GM12878 (cell line): ENCODE measurements at regions of chr7 and their contacts with region 1.

Region 1: GRCh38 chr7:27739909-27740448 is at the start of gene TAX1BP1:
- DNase-seq: peak; percentile 70
- ATAC-seq: peak; percentile 95
- H3K4me3 ChIP-seq: peak within 1 kb of the TSS; percentile 100
- H3K27ac ChIP-seq: peak within 1 kb of the TSS; percentile 96
- H3K4me1 ChIP-seq: no peaks in the 10 kb centered on the region
- H3K27me3 ChIP-seq: no peaks in the 10 kb centered on the region
- CTCF ChIP-seq: no peak
- EP300 ChIP-seq: no peak
- POLR2A ChIP-seq: peak; percentile 85
- RAD21 ChIP-seq: no peak
- polyA plus RNA-seq, gene TAX1BP1: 52.9 to 88.4 TPM

Region 2: DNA sequence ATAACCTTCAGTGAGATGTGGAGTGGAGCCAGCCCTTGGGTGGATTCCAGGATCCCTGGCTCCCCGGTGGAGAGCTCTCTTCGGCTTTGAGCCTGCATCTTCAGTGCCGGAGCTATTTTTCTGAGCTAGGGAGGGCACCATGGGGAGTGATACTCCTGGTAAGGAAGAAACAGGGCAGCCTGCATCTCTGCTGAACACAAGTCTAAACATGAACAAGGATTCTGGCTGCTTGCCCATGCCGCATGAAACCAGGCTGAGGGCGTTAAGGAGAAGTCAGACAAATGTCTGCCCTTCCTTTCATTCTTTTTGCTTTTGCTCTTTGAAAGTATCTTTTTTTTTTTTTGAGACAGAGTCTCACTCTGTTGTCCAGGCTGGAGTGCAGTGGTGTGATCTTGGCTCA is 437.0 kb before region 1 on chr7:
- CTCF ChIA-PET with region 1: no interaction called
- POLR2A ChIA-PET with region 1: no interaction called
- RAD21 ChIA-PET with region 1: no interaction called
- SMC1A ChIA-PET with region 1: no interaction called
- in situ Hi-C with region 1: no loop called
- intact Hi-C with region 1: no loop called
- DNase-seq: no peak
- ATAC-seq: no peak
- H3K4me3 ChIP-seq: no peak overlapping the region
- H3K27ac ChIP-seq: no peak overlapping the region
- H3K4me1 ChIP-seq: no peaks in the 10 kb centered on the region
- H3K27me3 ChIP-seq: no peaks in the 10 kb centered on the region
- CTCF ChIP-seq: no peak
- EP300 ChIP-seq: no peak
- POLR2A ChIP-seq: no peak
- RAD21 ChIP-seq: no peak

Region 3: DNA sequence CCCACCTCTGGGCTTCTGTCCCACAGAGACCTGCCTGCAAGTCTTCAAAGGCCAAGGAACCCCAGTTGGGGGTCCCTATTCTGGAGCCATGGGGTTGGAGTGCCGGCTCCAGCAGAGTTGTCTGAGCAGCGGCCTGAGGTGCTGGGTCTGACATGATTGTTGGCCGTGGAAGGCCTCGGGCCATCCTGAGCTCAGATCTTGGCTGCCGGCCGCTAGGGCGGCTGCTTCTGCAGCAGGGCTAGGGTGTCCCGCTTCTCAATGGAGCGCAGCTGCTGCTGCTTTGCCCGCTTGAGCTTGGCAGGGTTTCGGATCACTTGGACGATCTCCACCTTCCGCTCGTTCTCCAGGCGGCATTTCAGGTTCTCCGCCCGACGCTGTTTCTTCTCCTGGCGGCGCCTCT is 248.5 kb before region 1 on chr7:
- CTCF ChIA-PET with region 1: no interaction called
- POLR2A ChIA-PET with region 1: no interaction called
- RAD21 ChIA-PET with region 1: no interaction called
- SMC1A ChIA-PET with region 1: no interaction called
- in situ Hi-C with region 1: no loop called
- intact Hi-C with region 1: no loop called
- DNase-seq: no peak
- ATAC-seq: no peak
- H3K4me3 ChIP-seq: no peak overlapping the region
- H3K27ac ChIP-seq: no peak overlapping the region
- H3K4me1 ChIP-seq: no peaks in the 10 kb centered on the region
- H3K27me3 ChIP-seq: no peaks in the 10 kb centered on the region; a peak in 2 of 4 replicates
- CTCF ChIP-seq: no peak
- EP300 ChIP-seq: no peak
- POLR2A ChIP-seq: no peak
- RAD21 ChIP-seq: no peak

Region 4: DNA sequence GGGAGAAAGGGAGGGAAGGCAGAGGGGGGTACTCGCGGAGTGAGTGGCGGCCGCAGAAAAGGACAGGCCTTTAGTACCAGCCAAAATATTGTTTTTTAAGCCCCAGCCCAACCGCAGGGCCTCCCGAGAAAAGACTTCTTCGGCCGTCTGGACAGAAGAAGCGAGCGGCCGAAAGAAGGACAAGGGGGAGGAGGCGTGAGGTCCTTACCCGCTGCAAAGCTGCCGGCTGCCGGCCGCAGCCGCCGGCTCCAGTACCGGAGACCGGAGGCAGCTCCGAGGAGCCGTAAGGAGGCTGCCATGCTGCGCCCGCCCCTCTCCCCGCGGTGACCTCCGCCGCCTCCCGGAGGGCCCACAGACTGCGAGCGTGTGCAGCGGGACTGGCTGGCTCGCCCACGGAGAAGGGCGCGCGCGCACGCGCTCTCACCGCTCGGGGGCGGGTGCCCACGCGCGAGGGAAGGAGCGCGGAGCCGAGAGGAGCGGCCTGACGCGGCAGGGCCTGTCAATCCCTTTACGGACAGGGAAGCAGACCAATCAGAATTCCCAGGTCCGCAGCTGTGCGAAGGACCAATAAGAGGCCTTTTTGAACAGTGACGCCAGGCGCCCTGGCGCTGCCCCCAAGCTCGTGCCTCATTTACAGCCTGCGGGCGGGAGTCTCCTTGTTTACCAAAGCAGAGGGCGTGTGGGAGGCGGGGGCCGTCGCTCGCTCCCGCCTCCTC is 77.3 kb before region 1 on chr7 and contains the start of gene HIBADH:
- CTCF ChIA-PET with region 1: interaction called, 3 read pairs
- POLR2A ChIA-PET with region 1: interaction called, 8 read pairs
- RAD21 ChIA-PET with region 1: interaction called, 4 read pairs
- SMC1A ChIA-PET with region 1: interaction called, 14 read pairs
- in situ Hi-C with region 1: no loop called
- intact Hi-C with region 1: loop called (anchors 1 kb)
- DNase-seq: peak; percentile 94
- ATAC-seq: peak; percentile 99
- H3K4me3 ChIP-seq: peak within 1 kb of the TSS; percentile 92
- H3K27ac ChIP-seq: peak within 1 kb of the TSS; percentile 62
- H3K4me1 ChIP-seq: no peaks in the 10 kb centered on the region
- H3K27me3 ChIP-seq: no peaks in the 10 kb centered on the region
- CTCF ChIP-seq: 0 out of 6 replicates have a peak, but pooled peaks of 1 of the 3 experiments have one; percentile 2
- EP300 ChIP-seq: 0 out of 4 replicates have a peak, but pooled peaks of 1 of the 2 experiments have one; percentile 30
- POLR2A ChIP-seq: peak; percentile 93
- RAD21 ChIP-seq: no peak
- polyA plus RNA-seq, gene HIBADH: 8.7 to 9.2 TPM

Region 5: GRCh38 chr7:27723085-27723484 is 16.9 kb before region 1 on chr7:
- CTCF ChIA-PET with region 1: no interaction called
- POLR2A ChIA-PET with region 1: no interaction called
- RAD21 ChIA-PET with region 1: interaction called, 3 read pairs
- SMC1A ChIA-PET with region 1: interaction called, 12 read pairs
- in situ Hi-C with region 1: no loop called
- intact Hi-C with region 1: no loop called
- DNase-seq: no peak
- ATAC-seq: peak; percentile 56; the same call in 2 of the 3 replicates
- H3K4me3 ChIP-seq: no peak overlapping the region
- H3K27ac ChIP-seq: no peak overlapping the region
- H3K4me1 ChIP-seq: no peaks in the 10 kb centered on the region; the same call in 1 of the 2 replicates
- H3K27me3 ChIP-seq: no peaks in the 10 kb centered on the region; a peak in 1 of 4 replicates
- CTCF ChIP-seq: peak in 2 of 3 experiments; percentile 4 to 7; a peak in 1 of 6 replicates
- EP300 ChIP-seq: no peak
- POLR2A ChIP-seq: no peak
- RAD21 ChIP-seq: no peak